Heart left ventricle (tissue), 16 donors: ENCODE measurements at regions of chr13 and their contacts with region 1.

Region 1: GRCh38 chr13:40485611-40486517 is 180.6 kb downstream of the FOXO1 start:
- DNase-seq: no peak
- ATAC-seq: no peak
- H3K4me3 ChIP-seq: no peak overlapping the region
- H3K27ac ChIP-seq: peak overlapping the region in 1 of 12 donors; percentile 83
- H3K4me1 ChIP-seq: peaks cover 0 to 23% (median 2%) of the 10 kb centered on the region in 12 donors
- H3K27me3 ChIP-seq: no peaks in the 10 kb centered on the region
- CTCF ChIP-seq: no peak
- POLR2A ChIP-seq: no peak

Region 2: DNA sequence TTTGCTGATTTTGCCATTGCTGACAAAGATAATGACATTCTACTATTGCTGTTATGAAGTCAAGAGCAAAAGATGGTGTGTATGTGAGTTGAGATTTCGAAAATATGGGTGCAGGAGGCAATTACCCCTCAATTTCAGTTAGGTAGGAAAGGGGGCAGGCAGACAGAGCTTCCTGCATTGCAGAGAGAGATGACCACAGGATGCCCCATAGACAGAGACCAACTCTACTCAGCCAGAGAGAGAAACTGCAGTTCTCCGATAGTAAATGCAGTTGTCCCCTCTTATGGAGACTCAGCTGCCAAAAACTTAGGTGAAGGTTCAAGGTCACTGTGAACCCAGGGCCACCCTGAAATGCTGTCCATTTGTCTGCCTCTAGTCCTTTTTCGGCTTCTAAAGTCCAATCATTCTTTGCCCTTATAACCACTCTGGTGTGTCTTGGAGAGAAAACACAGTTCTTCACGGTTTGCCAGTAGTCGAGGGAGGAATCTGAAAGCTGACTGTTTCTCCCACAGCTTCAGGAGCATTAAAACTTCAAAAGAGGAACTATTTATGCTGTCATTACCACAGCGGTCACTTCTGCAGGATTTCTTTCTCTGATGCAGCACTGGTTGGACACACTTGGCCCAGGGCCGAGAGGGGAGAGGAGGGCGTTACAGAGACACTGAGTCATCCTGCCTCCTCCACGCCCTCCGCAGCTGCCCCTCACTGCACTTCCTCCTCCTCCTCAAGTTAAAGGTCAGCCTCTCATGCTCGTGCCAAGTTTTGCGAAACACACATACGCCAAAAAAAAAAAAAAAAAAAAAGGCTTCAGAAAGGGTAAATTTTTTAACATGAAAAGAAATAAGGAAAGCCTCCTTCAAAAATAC is 83.7 kb before region 1 on chr13:
- intact Hi-C with region 1: loop called in 1 of 10 experiments (anchors 10 kb)
- DNase-seq: peak; percentile 92 to 97 (median 97)
- ATAC-seq: peak; percentile 85 to 98 (median 98)
- H3K4me3 ChIP-seq: peak overlapping the region in 6 of 12 donors; percentile 11 to 25 (median 20)
- H3K27ac ChIP-seq: peak overlapping the region; percentile 11 to 76 (median 58)
- H3K4me1 ChIP-seq: peaks cover 4 to 40% (median 28%) of the 10 kb centered on the region in 12 donors
- H3K27me3 ChIP-seq: no peaks in the 10 kb centered on the region
- CTCF ChIP-seq: no peak
- POLR2A ChIP-seq: no peak

Region 3: DNA sequence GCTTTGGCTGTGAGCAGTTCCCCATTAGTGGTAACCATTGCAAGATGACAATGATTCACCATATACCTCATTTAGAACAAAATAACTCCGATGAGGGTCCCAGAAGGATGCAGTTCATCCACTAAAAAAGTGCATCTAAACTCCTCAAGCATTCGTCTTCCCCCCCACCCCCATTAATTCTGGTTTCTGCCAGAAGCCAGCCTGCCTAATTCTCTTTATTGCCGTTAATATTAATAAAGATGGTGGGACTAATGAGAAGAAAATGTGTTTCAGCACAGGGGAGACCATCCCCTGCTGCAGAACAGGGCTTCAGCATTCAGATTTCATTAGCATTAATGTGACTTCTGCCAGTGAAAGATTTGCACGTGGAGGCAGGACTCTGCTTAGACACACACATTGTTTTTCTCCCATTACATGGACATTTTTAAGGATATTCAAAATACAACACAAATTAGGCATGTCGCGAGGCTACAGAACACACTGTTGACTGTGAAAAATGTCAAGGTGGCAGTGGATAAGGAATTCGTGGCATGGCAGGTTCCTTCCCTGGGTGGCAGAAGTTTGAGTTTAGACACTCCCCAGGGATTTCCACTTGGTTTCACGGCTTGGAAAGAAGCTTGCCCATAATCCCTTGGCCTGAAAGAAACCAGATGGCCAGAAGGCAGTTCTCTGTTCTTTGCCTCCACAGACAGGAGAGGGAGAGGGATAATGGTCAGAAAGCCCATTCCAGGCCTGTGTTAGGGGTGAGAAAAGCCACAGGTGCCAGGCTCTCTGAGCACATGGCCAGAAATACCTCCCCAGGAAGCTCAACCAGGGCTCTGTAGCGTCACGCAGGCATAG is 55.9 kb before region 1 on chr13:
- intact Hi-C with region 1: no loop called
- DNase-seq: no peak
- ATAC-seq: no peak
- H3K4me3 ChIP-seq: no peak overlapping the region
- H3K27ac ChIP-seq: peak overlapping the region in 1 of 12 donors; percentile 73
- H3K4me1 ChIP-seq: peaks cover 0 to 33% (median 9%) of the 10 kb centered on the region in 12 donors
- H3K27me3 ChIP-seq: no peaks in the 10 kb centered on the region
- CTCF ChIP-seq: no peak
- POLR2A ChIP-seq: no peak

Region 4: GRCh38 chr13:40536443-40537113 is 50.7 kb after region 1 on chr13:
- intact Hi-C with region 1: loop called in 1 of 10 experiments (anchors 5 kb)
- DNase-seq: no peak
- ATAC-seq: peak in 3 of 4 donors; percentile 29 to 41 (median 39)
- H3K4me3 ChIP-seq: no peak overlapping the region
- H3K27ac ChIP-seq: no peak overlapping the region
- H3K4me1 ChIP-seq: peaks cover 0 to 19% (median 9%) of the 10 kb centered on the region in 12 donors
- H3K27me3 ChIP-seq: no peaks in the 10 kb centered on the region
- CTCF ChIP-seq: no peak
- POLR2A ChIP-seq: no peak

Region 5: GRCh38 chr13:40564342-40565001 is 78.6 kb after region 1 on chr13:
- intact Hi-C with region 1: loop called in 1 of 10 experiments (anchors 10 kb)
- DNase-seq: no peak
- ATAC-seq: peak; percentile 11 to 43 (median 18)
- H3K4me3 ChIP-seq: peak overlapping the region in 1 of 12 donors; percentile 13
- H3K27ac ChIP-seq: peak overlapping the region in 9 of 12 donors; percentile 4 to 59 (median 54)
- H3K4me1 ChIP-seq: peaks cover 9 to 87% (median 59%) of the 10 kb centered on the region in 12 donors
- H3K27me3 ChIP-seq: no peaks in the 10 kb centered on the region
- CTCF ChIP-seq: peak in 3 of 12 donors; percentile 18 to 28 (median 24)
- POLR2A ChIP-seq: no peak

Region 6: GRCh38 chr13:40578055-40578454 is 92.2 kb after region 1 on chr13:
- intact Hi-C with region 1: loop called in 1 of 10 experiments (anchors 10 kb)
- DNase-seq: no peak
- ATAC-seq: peak in 3 of 4 donors; percentile 28 to 50 (median 35)
- H3K4me3 ChIP-seq: no peak overlapping the region
- H3K27ac ChIP-seq: no peak overlapping the region
- H3K4me1 ChIP-seq: peaks cover 3 to 90% (median 59%) of the 10 kb centered on the region in 12 donors
- H3K27me3 ChIP-seq: no peaks in the 10 kb centered on the region
- CTCF ChIP-seq: no peak
- POLR2A ChIP-seq: no peak